ENCODE measurements at regions of chr3 and their contacts with region 1.

Region 1: GRCh38 chr3:3005146-3005744 is 104.9 kb downstream of the IL5RA start:
- DNase-seq: no peak
- H3K4me3 ChIP-seq: no peak overlapping the region
- H3K27ac ChIP-seq: no peak overlapping the region
- H3K4me1 ChIP-seq: peaks cover 0 to 6% (median under 1%) of the 10 kb centered on the region in 4 experiments; a peak in 2 of 7 replicates
- H3K27me3 ChIP-seq: no peaks in the 10 kb centered on the region; a peak in 1 of 7 replicates
- CTCF ChIP-seq: no peak
- EP300 ChIP-seq: no peak
- POLR2A ChIP-seq: no peak
- RAD21 ChIP-seq: no peak

Region 2: DNA sequence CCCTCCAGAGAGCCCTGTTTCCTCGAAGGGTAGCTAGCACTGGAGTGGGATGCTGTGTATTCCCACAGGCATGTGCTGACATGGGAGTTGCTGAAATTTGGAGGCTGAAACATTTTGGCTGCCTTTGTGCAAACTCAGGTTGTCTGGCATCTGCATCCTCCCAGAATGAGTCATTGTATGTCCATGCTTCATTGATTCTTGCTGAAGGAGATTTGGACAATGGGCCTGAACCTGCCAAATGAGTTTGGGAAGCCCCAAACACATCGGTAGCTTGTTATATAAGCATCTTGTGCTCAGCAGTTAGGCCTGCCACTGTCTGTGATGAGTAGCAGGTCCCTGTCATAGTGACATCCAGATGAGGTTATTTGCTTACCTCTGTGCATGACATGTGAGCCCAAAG is 55.1 kb before region 1 on chr3:
- CTCF ChIA-PET with region 1: no interaction called
- POLR2A ChIA-PET with region 1: no interaction called
- DNase-seq: no peak
- H3K4me3 ChIP-seq: no peak overlapping the region
- H3K27ac ChIP-seq: no peak overlapping the region
- H3K4me1 ChIP-seq: no peaks in the 10 kb centered on the region
- H3K27me3 ChIP-seq: no peaks in the 10 kb centered on the region
- CTCF ChIP-seq: no peak
- EP300 ChIP-seq: no peak
- POLR2A ChIP-seq: no peak
- RAD21 ChIP-seq: no peak

Region 3: DNA sequence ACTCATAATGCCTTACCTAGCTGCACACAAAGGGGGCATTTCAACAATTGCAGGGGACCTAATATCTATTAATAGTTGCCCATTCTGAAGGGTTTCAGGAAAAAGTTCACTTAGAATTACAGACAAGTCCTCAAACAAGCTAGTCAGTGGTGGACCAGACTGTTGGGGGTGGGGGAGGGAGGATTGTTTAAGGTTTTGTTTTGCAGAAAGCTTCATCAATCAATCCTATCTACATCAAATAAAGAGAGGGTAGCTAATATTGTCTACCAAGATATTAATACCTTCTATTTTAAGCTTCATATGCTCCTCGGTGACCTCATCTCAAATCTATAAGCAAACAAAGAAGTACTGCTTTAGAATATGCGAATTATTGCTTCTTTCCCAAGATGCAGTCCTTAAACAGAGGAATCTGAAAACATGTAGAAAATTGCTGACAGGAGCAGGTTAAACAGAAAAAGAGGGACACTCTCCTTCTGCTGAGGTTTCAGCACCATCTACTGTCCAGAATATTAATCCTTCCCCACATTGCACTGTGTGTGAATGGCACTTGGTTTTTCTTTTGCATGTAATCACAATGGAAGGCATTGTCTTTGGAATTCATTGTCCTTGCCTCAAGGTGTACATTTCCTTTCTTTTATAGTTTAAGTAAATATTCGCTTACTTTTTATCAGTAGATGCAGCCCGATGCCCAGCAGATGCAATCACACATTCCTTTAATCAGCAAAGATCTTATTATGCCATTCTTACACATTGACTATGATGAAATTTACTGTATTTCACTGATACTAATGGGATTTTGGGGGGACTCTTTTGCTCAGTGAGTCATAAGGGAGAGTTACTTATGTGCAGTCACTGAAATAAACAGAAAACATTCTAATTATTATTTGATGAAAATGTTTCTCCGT is 10.2 kb after region 1 on chr3:
- CTCF ChIA-PET with region 1: interaction called, 12 read pairs
- POLR2A ChIA-PET with region 1: no interaction called
- DNase-seq: no peak
- H3K4me3 ChIP-seq: peak overlapping the region in 1 of 4 experiments; percentile 14; a peak in 1 of 8 replicates
- H3K27ac ChIP-seq: no peak overlapping the region
- H3K4me1 ChIP-seq: peaks cover 0 to 15% (median 8%) of the 10 kb centered on the region in 4 experiments; a peak in 5 of 7 replicates
- H3K27me3 ChIP-seq: no peaks in the 10 kb centered on the region
- CTCF ChIP-seq: peak in 2 of 3 experiments; percentile 33 to 61; a peak in 2 of 4 replicates
- EP300 ChIP-seq: no peak
- POLR2A ChIP-seq: no peak
- RAD21 ChIP-seq: peak; percentile 88 to 91

Region 4: DNA sequence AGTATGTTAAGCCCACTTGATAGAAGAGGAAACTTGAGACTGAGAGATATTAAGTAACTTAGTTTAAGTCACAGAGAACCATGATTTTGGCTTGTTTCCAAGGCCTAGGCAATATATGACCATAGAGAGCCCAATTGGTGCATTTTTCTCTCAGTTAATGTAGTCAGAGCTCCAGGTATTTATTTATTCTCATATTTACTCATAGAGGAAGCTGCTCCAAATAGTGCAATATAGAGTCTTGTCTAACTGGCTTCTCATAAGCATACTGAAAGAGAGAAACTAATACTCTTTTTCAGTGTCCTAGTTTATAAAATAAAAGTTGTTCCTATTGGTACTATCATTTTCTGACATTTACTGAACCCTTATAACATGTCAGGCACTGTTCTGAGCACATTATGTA is 136.7 kb after region 1 on chr3:
- CTCF ChIA-PET with region 1: no interaction called
- POLR2A ChIA-PET with region 1: no interaction called
- DNase-seq: no peak
- H3K4me3 ChIP-seq: no peak overlapping the region
- H3K27ac ChIP-seq: no peak overlapping the region
- H3K4me1 ChIP-seq: no peaks in the 10 kb centered on the region
- H3K27me3 ChIP-seq: no peaks in the 10 kb centered on the region
- CTCF ChIP-seq: no peak
- EP300 ChIP-seq: no peak
- POLR2A ChIP-seq: no peak
- RAD21 ChIP-seq: no peak

Measured in H1 (cell line).